ENCODE measurements at regions of chr20 and their contacts with region 1.

Region 1: GRCh38 chr20:54199721-54200176 is 8.1 kb upstream of the PFDN4 start:
- DNase-seq: peak; percentile 58 to 91 (median 78)
- H3K4me3 ChIP-seq: no peak overlapping the region
- H3K27ac ChIP-seq: no peak overlapping the region
- H3K4me1 ChIP-seq: peaks cover 0 to 4% of the 10 kb centered on the region in 2 donors
- H3K27me3 ChIP-seq: no peaks in the 10 kb centered on the region
- CTCF ChIP-seq: peak; percentile 74 to 95 (median 84)
- POLR2A ChIP-seq: no peak

Region 2: DNA sequence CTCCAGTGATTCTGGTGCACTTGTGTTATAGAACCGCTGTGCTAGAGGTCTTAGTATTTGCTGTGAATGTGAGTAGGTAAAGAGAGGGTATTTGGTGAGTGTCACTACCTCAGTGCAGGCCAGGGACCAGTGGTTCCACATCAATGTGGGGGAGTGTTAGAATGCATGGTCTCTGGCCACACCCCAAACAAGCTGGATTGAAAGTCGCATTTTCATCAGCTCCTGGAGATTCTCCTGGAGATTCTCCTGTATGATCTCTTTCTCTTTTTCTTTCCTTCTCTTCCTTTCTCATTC is 102.6 kb before region 1 on chr20:
- intact Hi-C with region 1: loop called (anchors 5 kb)
- DNase-seq: no peak
- H3K4me3 ChIP-seq: no peak overlapping the region
- H3K27ac ChIP-seq: no peak overlapping the region
- H3K4me1 ChIP-seq: no peaks in the 10 kb centered on the region
- H3K27me3 ChIP-seq: peaks cover 6% of the 10 kb centered on the region
- CTCF ChIP-seq: no peak
- POLR2A ChIP-seq: no peak

Region 3: GRCh38 chr20:54103067-54103761 is 96.5 kb before region 1 on chr20:
- intact Hi-C with region 1: loop called (anchors 5 kb)
- DNase-seq: peak; percentile 75 to 87 (median 83)
- H3K4me3 ChIP-seq: no peak overlapping the region
- H3K27ac ChIP-seq: no peak overlapping the region
- H3K4me1 ChIP-seq: no peaks in the 10 kb centered on the region
- H3K27me3 ChIP-seq: no peaks in the 10 kb centered on the region
- CTCF ChIP-seq: peak; percentile 45 to 91 (median 74)
- POLR2A ChIP-seq: no peak